ENCODE measurements at regions of chr20 and their contacts with region 1.

Region 1: GRCh38 chr20:62121776-62122631 is at the start of gene LSM14B:
- DNase-seq: peak; percentile 89 to 99 (median 96)
- ATAC-seq: peak; percentile 75
- H3K4me3 ChIP-seq: peak within 1 kb of the TSS; percentile 57
- H3K4me3 Mint-ChIP-seq: peak within 1 kb of the TSS; percentile 93
- H3K27ac ChIP-seq: peak within 1 kb of the TSS; percentile 62 to 89
- H3K27ac Mint-ChIP-seq: peak within 1 kb of the TSS; percentile 94
- H3K4me1 ChIP-seq: peaks cover 62% of the 10 kb centered on the region
- H3K4me1 Mint-ChIP-seq: peaks cover 61% of the 10 kb centered on the region
- H3K27me3 ChIP-seq: no peaks in the 10 kb centered on the region
- H3K27me3 Mint-ChIP-seq: no peaks in the 10 kb centered on the region
- CTCF ChIP-seq: no peak
- total RNA-seq, gene LSM14B: 34.5 to 35.7 TPM

Region 2: DNA sequence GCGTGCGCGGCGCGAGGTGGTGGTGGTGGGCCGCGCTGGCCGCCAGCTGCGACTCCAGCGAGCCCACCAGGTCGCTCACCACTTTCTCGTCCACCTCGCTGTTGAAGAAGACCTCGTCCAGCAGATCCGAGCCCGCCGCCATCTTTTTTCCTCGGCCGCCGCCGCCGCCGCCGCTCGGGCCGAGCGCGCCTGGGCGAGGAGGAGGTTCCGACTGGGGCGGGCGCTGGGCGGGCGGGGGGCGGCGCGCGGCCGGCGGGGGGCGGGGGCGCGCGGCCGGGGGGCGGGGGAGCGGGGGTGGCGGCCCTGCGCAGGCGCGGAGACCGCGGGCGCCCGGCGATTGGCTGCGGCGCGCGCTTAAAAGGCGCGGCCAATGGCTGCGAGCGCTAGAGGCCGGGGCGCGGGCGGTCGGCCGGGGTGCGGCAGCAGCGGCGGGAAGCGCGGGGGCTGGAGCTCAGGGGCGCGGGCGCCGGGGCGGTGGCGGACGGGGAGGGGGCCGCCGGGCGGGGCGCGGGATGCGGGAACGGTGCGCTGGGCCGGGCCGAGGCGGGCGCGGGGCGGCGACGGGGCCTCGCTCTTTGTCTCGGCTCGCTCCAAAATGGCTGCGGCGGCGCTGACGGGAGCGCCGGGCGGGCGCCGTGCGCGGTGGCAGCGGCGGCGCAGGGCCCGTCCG is 56.2 kb before region 1 on chr20 and contains the start of gene TAF4:
- CTCF ChIA-PET with region 1: interaction called, 6 read pairs
- POLR2A ChIA-PET with region 1: interaction called, 149 read pairs
- intact Hi-C with region 1: loop called (anchors 1 to 2 kb)
- DNase-seq: peak; percentile 58 to 95 (median 80)
- ATAC-seq: peak; percentile 74
- H3K4me3 ChIP-seq: peak within 1 kb of the TSS; percentile 77
- H3K4me3 Mint-ChIP-seq: peak within 1 kb of the TSS; percentile 96
- H3K27ac ChIP-seq: peak within 1 kb of the TSS; percentile 15 to 70
- H3K27ac Mint-ChIP-seq: peak within 1 kb of the TSS; percentile 98
- H3K4me1 ChIP-seq: peaks cover 46% of the 10 kb centered on the region
- H3K4me1 Mint-ChIP-seq: peaks cover 51% of the 10 kb centered on the region
- H3K27me3 ChIP-seq: no peaks in the 10 kb centered on the region
- H3K27me3 Mint-ChIP-seq: no peaks in the 10 kb centered on the region
- CTCF ChIP-seq: no peak
- total RNA-seq, gene TAF4: 11.1 to 12.5 TPM

Region 3: DNA sequence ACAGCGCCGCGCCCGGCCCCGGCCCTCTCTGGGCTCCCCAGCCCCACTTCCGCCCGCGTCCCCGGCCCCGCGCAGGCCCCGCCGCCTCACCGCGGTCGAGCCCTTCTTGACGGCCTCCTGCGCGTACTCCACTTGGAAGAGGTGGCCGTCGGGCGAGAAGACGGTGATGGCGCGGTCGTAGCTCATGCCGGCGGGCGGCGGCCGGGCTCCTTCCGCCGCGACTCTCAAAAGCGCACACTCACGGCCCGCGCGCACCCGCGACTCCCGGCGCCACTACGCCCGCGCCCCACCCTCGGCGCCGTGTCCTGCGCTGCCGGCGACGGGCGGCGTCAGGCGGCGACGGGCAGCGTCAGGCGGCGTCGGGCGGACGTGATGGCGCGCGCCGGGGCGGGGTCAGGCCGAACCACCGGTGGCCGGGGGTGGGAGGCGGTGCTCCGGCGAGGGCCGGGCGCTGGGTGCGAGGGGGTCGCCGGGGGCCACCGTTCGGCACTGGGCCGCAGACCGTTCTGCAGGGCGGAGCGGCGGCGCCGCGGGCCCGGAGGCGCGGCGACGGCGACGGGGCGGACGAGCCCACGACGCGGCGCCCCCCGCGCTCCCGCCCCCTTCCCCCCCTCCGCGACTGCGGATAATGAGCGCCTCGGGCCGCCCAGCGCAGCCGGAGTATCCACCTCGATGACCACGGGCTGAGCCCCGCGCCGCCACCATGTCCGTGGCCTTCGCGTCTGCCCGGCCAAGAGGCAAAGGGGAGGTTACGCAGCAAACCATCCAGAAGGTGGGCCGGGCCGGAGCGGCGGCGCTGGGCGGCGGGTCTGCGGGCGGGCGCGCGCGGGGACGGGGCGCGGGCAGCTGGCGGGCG is 21.3 kb after region 1 on chr20 and contains the starts of genes PSMA7 and SS18L1:
- CTCF ChIA-PET with region 1: interaction called, 4 read pairs
- POLR2A ChIA-PET with region 1: interaction called, 78 read pairs
- intact Hi-C with region 1: loop called in 1 of 2 experiments (anchors 1 kb)
- DNase-seq: peak; percentile 71 to 98 (median 83)
- ATAC-seq: peak; percentile 83
- H3K4me3 ChIP-seq: peak within 1 kb of the TSS; percentile 65
- H3K4me3 Mint-ChIP-seq: peak within 1 kb of the TSS; percentile 95
- H3K27ac ChIP-seq: peak within 1 kb of the TSS; percentile 53 to 75
- H3K27ac Mint-ChIP-seq: peak within 1 kb of the TSS; percentile 96
- H3K4me1 ChIP-seq: peaks cover 49% of the 10 kb centered on the region
- H3K4me1 Mint-ChIP-seq: peaks cover 51% of the 10 kb centered on the region
- H3K27me3 ChIP-seq: no peaks in the 10 kb centered on the region
- H3K27me3 Mint-ChIP-seq: no peaks in the 10 kb centered on the region
- CTCF ChIP-seq: no peak
- total RNA-seq, gene PSMA7: 150 to 158 TPM
- total RNA-seq, gene SS18L1: 12.8 to 13.4 TPM

Region 4: DNA sequence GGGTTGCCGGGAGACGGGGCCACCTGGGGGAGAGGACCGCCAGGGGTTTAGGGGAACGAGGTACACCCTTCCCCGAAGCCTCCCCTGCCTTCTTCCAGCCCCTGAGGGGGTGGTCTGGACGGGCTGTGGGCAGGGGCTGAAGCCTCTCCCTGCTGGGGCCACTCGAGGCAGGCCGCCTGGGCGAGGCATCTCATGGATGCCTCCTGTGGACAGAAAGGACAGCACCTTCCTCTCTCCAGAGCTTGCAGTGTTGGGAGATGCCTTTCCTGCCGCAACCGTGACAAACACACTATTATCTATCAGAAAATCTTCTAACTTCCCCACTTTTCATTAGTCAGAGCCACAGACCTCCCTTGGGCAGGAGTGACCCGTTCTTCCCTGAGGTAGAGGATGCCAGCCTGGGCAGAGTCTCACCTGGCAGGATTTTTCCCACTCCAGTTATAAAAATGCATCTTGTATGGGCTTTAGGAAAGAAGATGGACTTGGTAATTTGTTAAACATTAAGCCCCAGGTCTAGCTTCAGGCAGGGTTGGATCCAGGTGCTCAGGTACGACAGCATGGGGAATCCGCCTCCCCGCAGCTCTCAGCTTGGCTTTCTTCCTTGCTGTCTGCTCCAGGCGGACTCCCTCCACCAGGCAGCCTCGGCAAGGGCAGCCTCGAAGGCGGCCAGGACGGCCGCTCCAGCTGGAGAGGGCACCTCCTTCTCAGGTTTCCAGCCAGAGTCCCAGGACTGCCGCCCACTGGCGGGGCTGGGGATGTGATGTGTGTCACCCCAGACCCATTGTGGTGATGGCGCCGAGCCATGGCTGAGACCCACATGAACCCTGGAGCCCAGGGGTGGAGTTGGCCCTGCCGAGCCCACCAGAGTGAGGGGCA is 87.1 kb after region 1 on chr20:
- CTCF ChIA-PET with region 1: no interaction called
- POLR2A ChIA-PET with region 1: no interaction called
- intact Hi-C with region 1: no loop called
- DNase-seq: no peak
- ATAC-seq: no peak
- H3K4me3 ChIP-seq: no peak overlapping the region
- H3K4me3 Mint-ChIP-seq: no peak overlapping the region
- H3K27ac ChIP-seq: no peak overlapping the region
- H3K27ac Mint-ChIP-seq: no peak overlapping the region
- H3K4me1 ChIP-seq: no peaks in the 10 kb centered on the region
- H3K4me1 Mint-ChIP-seq: no peaks in the 10 kb centered on the region
- H3K27me3 ChIP-seq: peaks cover 9 to 23% of the 10 kb centered on the region in 2 experiments
- H3K27me3 Mint-ChIP-seq: no peaks in the 10 kb centered on the region
- CTCF ChIP-seq: no peak

Region 5: GRCh38 chr20:62237801-62238571 is 116.0 kb after region 1 on chr20 and contains the start of gene OSBPL2:
- CTCF ChIA-PET with region 1: no interaction called
- POLR2A ChIA-PET with region 1: interaction called, 8 read pairs
- intact Hi-C with region 1: loop called in 1 of 2 experiments (anchors 5 kb)
- DNase-seq: peak; percentile 100
- ATAC-seq: peak; percentile 98
- H3K4me3 ChIP-seq: peak within 1 kb of the TSS; percentile 64
- H3K4me3 Mint-ChIP-seq: peak within 1 kb of the TSS; percentile 92
- H3K27ac ChIP-seq: peak within 1 kb of the TSS; percentile 32 to 57
- H3K27ac Mint-ChIP-seq: peak within 1 kb of the TSS; percentile 95
- H3K4me1 ChIP-seq: peaks cover 36% of the 10 kb centered on the region
- H3K4me1 Mint-ChIP-seq: peaks cover 43% of the 10 kb centered on the region
- H3K27me3 ChIP-seq: no peaks in the 10 kb centered on the region
- H3K27me3 Mint-ChIP-seq: peaks cover 9% of the 10 kb centered on the region
- CTCF ChIP-seq: no peak
- total RNA-seq, gene OSBPL2: 52.8 to 54.4 TPM

Measured in CD4-positive, alpha-beta T cell (primary cell).